PC-9 (cell line): ENCODE measurements at regions of chr15 and their contacts with region 1.

Region 1: GRCh38 chr15:42891569-42891968 is 29.0 kb downstream of the TTBK2 start:
- DNase-seq: no peak
- H3K4me3 ChIP-seq: no peak overlapping the region
- H3K27ac ChIP-seq: no peak overlapping the region
- H3K4me1 ChIP-seq: peaks cover 15% of the 10 kb centered on the region
- H3K27me3 ChIP-seq: no peaks in the 10 kb centered on the region
- CTCF ChIP-seq: no peak

Region 2: GRCh38 chr15:42858540-42858939 is 33.0 kb before region 1 on chr15:
- CTCF ChIA-PET with region 1: no interaction called
- POLR2A ChIA-PET with region 1: no interaction called
- intact Hi-C with region 1: loop called (anchors 1 kb)
- DNase-seq: peak; percentile 56 to 81
- H3K4me3 ChIP-seq: no peak overlapping the region
- H3K27ac ChIP-seq: no peak overlapping the region; the same call in 1 of the 2 replicates
- H3K4me1 ChIP-seq: peaks cover 30% of the 10 kb centered on the region
- H3K27me3 ChIP-seq: no peaks in the 10 kb centered on the region
- CTCF ChIP-seq: no peak

Region 3: GRCh38 chr15:42868683-42869082 is 22.9 kb before region 1 on chr15:
- CTCF ChIA-PET with region 1: no interaction called
- POLR2A ChIA-PET with region 1: interaction called, 16 read pairs
- intact Hi-C with region 1: no loop called
- DNase-seq: no peak
- H3K4me3 ChIP-seq: no peak overlapping the region
- H3K27ac ChIP-seq: no peak overlapping the region
- H3K4me1 ChIP-seq: no peaks in the 10 kb centered on the region
- H3K27me3 ChIP-seq: no peaks in the 10 kb centered on the region
- CTCF ChIP-seq: no peak